CD4-positive, alpha-beta memory T cell (primary cell): ENCODE measurements at regions of chr17 and their contacts with region 1.

Region 1: GRCh38 chr17:752002-752619 is at the start of gene GEMIN4:
- DNase-seq: peak; percentile 93 to 99 (median 96)
- H3K4me3 ChIP-seq: peak within 1 kb of the TSS; percentile 73 to 81
- H3K4me3 Mint-ChIP-seq: peak within 1 kb of the TSS; percentile 92 to 97 (median 94)
- H3K27ac ChIP-seq: peak within 1 kb of the TSS; percentile 69
- H3K27ac Mint-ChIP-seq: peak within 1 kb of the TSS; percentile 86 to 97 (median 95)
- H3K4me1 ChIP-seq: peaks cover 27% of the 10 kb centered on the region
- H3K4me1 Mint-ChIP-seq: peaks cover 24 to 46% (median 33%) of the 10 kb centered on the region in 4 donors
- H3K27me3 ChIP-seq: no peaks in the 10 kb centered on the region
- H3K27me3 Mint-ChIP-seq: no peaks in the 10 kb centered on the region
- total RNA-seq, gene GEMIN4: 24.4 to 24.7 TPM

Region 2: DNA sequence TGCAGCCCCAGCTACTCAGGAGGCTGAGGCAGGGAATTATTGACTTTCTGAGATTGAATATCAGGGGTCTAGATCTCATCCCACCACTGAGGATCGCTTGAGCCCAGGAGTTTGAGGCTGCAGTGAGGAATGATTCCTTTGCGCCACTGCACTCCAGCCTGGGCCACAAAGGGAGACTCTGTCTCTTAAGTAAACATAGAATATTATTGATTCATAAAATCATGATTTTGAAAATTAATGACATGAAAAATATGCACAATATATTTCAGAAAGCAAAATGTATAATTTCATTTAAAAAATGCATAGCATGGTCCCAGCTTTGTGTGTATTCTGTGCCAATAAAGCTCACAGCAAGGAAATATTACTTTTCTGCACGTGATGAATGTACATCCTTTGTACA is 35.9 kb before region 1 on chr17:
- CTCF ChIA-PET with region 1: interaction called, 5 read pairs
- POLR2A ChIA-PET with region 1: interaction called, 12 read pairs
- intact Hi-C with region 1: loop called (anchors 1 kb)
- DNase-seq: no peak
- H3K4me3 ChIP-seq: no peak overlapping the region
- H3K4me3 Mint-ChIP-seq: peak overlapping the region in 5 of 8 donors; percentile 17 to 66 (median 63)
- H3K27ac ChIP-seq: no peak overlapping the region
- H3K27ac Mint-ChIP-seq: no peak overlapping the region
- H3K4me1 ChIP-seq: peaks cover 19% of the 10 kb centered on the region
- H3K4me1 Mint-ChIP-seq: peaks cover 13 to 33% (median 23%) of the 10 kb centered on the region in 4 donors
- H3K27me3 ChIP-seq: no peaks in the 10 kb centered on the region
- H3K27me3 Mint-ChIP-seq: peaks cover 0 to 2% of the 10 kb centered on the region in 2 donors

Region 3: GRCh38 chr17:732067-732901 is 19.8 kb before region 1 on chr17 and contains the start of gene TLCD3A:
- CTCF ChIA-PET with region 1: interaction called, 5 read pairs
- POLR2A ChIA-PET with region 1: interaction called, 5 read pairs
- intact Hi-C with region 1: loop called (anchors 2 kb)
- DNase-seq: peak; percentile 34 to 58 (median 39)
- H3K4me3 ChIP-seq: peak within 1 kb of the TSS in 1 of 2 donors; percentile 46
- H3K4me3 Mint-ChIP-seq: peak within 1 kb of the TSS; percentile 79 to 86 (median 80)
- H3K27ac ChIP-seq: no peak within 1 kb of the TSS
- H3K27ac Mint-ChIP-seq: peak within 1 kb of the TSS in 4 of 7 donors; percentile 6 to 71 (median 46)
- H3K4me1 ChIP-seq: peaks cover 5% of the 10 kb centered on the region
- H3K4me1 Mint-ChIP-seq: peaks cover 0 to 11% (median 5%) of the 10 kb centered on the region in 4 donors
- H3K27me3 ChIP-seq: no peaks in the 10 kb centered on the region
- H3K27me3 Mint-ChIP-seq: peaks cover 0 to 4% of the 10 kb centered on the region in 2 donors
- total RNA-seq, gene TLCD3A: 0.42 to 0.55 TPM

Region 4: GRCh38 chr17:850851-851763 is 99.0 kb after region 1 on chr17:
- CTCF ChIA-PET with region 1: no interaction called
- POLR2A ChIA-PET with region 1: no interaction called
- intact Hi-C with region 1: no loop called
- DNase-seq: no peak
- H3K4me3 ChIP-seq: no peak overlapping the region
- H3K4me3 Mint-ChIP-seq: no peak overlapping the region
- H3K27ac ChIP-seq: no peak overlapping the region
- H3K27ac Mint-ChIP-seq: no peak overlapping the region
- H3K4me1 ChIP-seq: peaks cover 10% of the 10 kb centered on the region
- H3K4me1 Mint-ChIP-seq: peaks cover 5 to 17% (median 9%) of the 10 kb centered on the region in 4 donors
- H3K27me3 ChIP-seq: peaks cover 3% of the 10 kb centered on the region
- H3K27me3 Mint-ChIP-seq: peaks cover 14 to 30% of the 10 kb centered on the region in 2 donors

Region 5: GRCh38 chr17:988561-988960 is 236.4 kb after region 1 on chr17:
- CTCF ChIA-PET with region 1: no interaction called
- POLR2A ChIA-PET with region 1: no interaction called
- intact Hi-C with region 1: no loop called
- DNase-seq: no peak
- H3K4me3 ChIP-seq: no peak overlapping the region
- H3K4me3 Mint-ChIP-seq: no peak overlapping the region
- H3K27ac ChIP-seq: no peak overlapping the region
- H3K27ac Mint-ChIP-seq: no peak overlapping the region
- H3K4me1 ChIP-seq: no peaks in the 10 kb centered on the region
- H3K4me1 Mint-ChIP-seq: no peaks in the 10 kb centered on the region
- H3K27me3 ChIP-seq: no peaks in the 10 kb centered on the region
- H3K27me3 Mint-ChIP-seq: no peaks in the 10 kb centered on the region